IMR-90 (cell line): ENCODE measurements at regions of chr6 and their contacts with region 1.

Region 1: DNA sequence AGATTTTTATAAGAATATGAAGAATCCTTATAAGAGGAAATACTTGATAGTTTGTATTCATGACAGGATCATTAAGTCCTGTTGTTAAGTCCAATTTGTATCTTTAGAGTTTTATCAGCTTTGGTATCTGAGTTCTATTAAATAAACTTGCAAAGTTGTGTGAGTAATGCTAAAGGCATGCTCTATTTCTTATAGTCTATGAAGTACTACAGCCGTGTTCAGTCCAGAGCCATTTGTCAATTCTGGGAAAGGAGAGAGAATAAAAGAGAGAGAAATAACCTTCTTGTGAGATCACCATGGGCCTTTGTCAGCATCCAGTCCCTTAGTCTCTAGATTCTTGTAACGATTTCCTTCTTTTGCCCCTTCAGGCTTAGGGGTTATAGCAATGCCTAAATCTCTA is 181.2 kb upstream of the POU3F2 start:
- DNase-seq: no peak
- ATAC-seq: no peak
- H3K4me3 ChIP-seq: no peak overlapping the region
- H3K27ac ChIP-seq: no peak overlapping the region
- H3K4me1 ChIP-seq: no peaks in the 10 kb centered on the region
- H3K27me3 ChIP-seq: no peaks in the 10 kb centered on the region
- CTCF ChIP-seq: no peak
- POLR2A ChIP-seq: no peak
- RAD21 ChIP-seq: no peak

Region 2: DNA sequence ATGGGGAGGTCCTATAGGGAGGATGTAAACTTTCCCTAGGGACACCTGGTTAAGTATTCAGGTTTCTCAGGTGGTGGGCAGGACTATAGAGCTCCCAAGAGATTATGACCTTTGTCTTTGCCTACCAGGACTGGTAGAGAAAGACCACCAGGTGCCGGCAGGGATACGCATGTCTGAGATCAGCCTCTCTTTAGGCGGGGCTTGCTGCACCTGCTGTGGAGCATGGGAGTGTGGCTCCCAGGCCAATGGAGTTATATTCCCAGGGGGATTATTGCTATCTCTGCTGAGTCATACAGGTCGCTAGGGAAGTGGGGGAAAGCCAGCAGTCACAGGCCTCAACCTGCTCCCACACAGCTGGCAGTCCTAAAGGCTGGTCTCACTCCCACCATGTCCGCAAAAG is 1089.7 kb before region 1 on chr6:
- CTCF ChIA-PET with region 1: no interaction called
- POLR2A ChIA-PET with region 1: no interaction called
- dilution Hi-C with region 1: no loop called
- in situ Hi-C with region 1: no loop called
- intact Hi-C with region 1: no loop called
- DNase-seq: no peak
- ATAC-seq: no peak
- H3K4me3 ChIP-seq: no peak overlapping the region
- H3K27ac ChIP-seq: no peak overlapping the region
- H3K4me1 ChIP-seq: no peaks in the 10 kb centered on the region
- H3K27me3 ChIP-seq: no peaks in the 10 kb centered on the region
- CTCF ChIP-seq: no peak
- POLR2A ChIP-seq: no peak
- RAD21 ChIP-seq: no peak

Region 3: GRCh38 chr6:98525860-98526259 is 127.3 kb before region 1 on chr6:
- CTCF ChIA-PET with region 1: no interaction called
- POLR2A ChIA-PET with region 1: interaction called, 10 read pairs
- dilution Hi-C with region 1: no loop called
- in situ Hi-C with region 1: no loop called
- intact Hi-C with region 1: no loop called
- DNase-seq: no peak
- ATAC-seq: no peak
- H3K4me3 ChIP-seq: no peak overlapping the region
- H3K27ac ChIP-seq: no peak overlapping the region
- H3K4me1 ChIP-seq: no peaks in the 10 kb centered on the region
- H3K27me3 ChIP-seq: no peaks in the 10 kb centered on the region
- CTCF ChIP-seq: no peak
- POLR2A ChIP-seq: no peak
- RAD21 ChIP-seq: no peak

Region 4: DNA sequence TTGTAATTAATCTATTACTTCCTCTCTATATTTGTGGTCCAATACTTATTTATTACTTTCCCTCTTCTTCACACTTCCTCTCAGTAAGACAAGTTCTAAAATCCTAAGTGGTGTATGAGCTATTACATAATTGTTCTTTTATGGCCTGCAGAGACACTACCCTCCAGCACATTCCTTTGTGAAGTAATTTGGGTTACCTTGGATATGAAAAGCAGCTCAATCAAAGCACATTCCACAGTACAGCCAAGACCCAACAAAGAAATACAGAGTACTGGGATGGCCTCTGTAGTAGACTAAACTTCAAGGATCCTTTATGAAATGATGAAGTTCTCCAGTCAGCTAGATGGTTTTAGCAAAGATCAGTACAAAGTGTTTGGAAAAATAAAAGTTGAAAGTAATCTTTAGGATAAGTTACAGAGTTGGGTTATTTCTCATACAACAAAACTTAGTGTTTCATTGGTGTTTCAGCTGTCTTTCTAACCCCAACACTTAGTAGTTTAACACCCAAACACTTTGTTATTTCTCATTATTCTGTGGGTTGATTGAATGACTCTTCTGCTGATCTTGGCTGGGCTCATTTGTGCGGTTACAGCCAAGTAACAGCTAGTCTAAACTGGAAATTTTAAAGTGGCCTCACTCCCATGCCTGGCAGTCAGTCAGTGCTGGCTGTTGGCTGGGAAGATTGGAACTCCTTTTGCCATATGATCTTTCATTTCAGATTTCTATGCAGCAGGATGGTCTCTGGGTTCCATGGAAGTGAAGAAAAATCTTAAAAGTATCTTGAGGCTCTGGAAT is 19.7 kb after region 1 on chr6:
- CTCF ChIA-PET with region 1: no interaction called
- POLR2A ChIA-PET with region 1: no interaction called
- dilution Hi-C with region 1: no loop called
- in situ Hi-C with region 1: no loop called
- intact Hi-C with region 1: no loop called
- DNase-seq: no peak
- ATAC-seq: no peak
- H3K4me3 ChIP-seq: no peak overlapping the region
- H3K27ac ChIP-seq: no peak overlapping the region
- H3K4me1 ChIP-seq: no peaks in the 10 kb centered on the region
- H3K27me3 ChIP-seq: no peaks in the 10 kb centered on the region
- CTCF ChIP-seq: no peak
- POLR2A ChIP-seq: no peak
- RAD21 ChIP-seq: no peak